Right cardiac atrium (tissue), 5 donors: ENCODE measurements at regions of chr12 and their contacts with region 1.

Region 1: DNA sequence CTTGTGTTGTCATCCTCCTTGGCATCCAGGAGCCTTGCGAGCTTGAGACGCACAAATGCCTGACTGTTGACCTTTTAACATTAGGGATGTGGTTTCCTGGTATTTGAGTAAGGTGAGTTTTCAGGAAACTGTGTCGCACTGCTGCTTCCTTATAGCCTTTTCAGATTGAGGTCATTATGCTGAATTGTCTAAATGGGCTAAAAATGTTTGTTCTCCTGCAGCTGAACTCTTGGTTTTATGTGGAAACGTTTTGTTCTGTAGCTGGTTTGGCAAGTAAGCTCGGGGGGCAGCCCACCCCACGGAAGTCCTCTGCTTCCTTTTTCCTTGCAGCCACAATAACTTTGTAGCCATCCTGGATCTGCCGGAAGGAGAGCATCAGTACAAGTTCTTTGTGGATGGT is 5.7 kb downstream of the PRKAB1 start:
- DNase-seq: peak in 2 of 3 donors; percentile 36 to 60
- ATAC-seq: peak; percentile 56 to 83
- H3K4me3 ChIP-seq: no peak overlapping the region
- H3K27ac ChIP-seq: peak overlapping the region; percentile 68
- H3K4me1 ChIP-seq: peaks cover 7% of the 10 kb centered on the region
- H3K27me3 ChIP-seq: no peaks in the 10 kb centered on the region

Region 2: GRCh38 chr12:119266963-119267362 is 406.7 kb before region 1 on chr12:
- intact Hi-C with region 1: no loop called
- DNase-seq: no peak
- ATAC-seq: no peak
- H3K4me3 ChIP-seq: no peak overlapping the region
- H3K27ac ChIP-seq: no peak overlapping the region
- H3K4me1 ChIP-seq: no peaks in the 10 kb centered on the region
- H3K27me3 ChIP-seq: no peaks in the 10 kb centered on the region

Region 3: GRCh38 chr12:119601877-119602733 is 71.5 kb before region 1 on chr12:
- intact Hi-C with region 1: no loop called
- DNase-seq: no peak
- ATAC-seq: no peak
- H3K4me3 ChIP-seq: no peak overlapping the region
- H3K27ac ChIP-seq: no peak overlapping the region
- H3K4me1 ChIP-seq: no peaks in the 10 kb centered on the region
- H3K27me3 ChIP-seq: no peaks in the 10 kb centered on the region

Region 4: DNA sequence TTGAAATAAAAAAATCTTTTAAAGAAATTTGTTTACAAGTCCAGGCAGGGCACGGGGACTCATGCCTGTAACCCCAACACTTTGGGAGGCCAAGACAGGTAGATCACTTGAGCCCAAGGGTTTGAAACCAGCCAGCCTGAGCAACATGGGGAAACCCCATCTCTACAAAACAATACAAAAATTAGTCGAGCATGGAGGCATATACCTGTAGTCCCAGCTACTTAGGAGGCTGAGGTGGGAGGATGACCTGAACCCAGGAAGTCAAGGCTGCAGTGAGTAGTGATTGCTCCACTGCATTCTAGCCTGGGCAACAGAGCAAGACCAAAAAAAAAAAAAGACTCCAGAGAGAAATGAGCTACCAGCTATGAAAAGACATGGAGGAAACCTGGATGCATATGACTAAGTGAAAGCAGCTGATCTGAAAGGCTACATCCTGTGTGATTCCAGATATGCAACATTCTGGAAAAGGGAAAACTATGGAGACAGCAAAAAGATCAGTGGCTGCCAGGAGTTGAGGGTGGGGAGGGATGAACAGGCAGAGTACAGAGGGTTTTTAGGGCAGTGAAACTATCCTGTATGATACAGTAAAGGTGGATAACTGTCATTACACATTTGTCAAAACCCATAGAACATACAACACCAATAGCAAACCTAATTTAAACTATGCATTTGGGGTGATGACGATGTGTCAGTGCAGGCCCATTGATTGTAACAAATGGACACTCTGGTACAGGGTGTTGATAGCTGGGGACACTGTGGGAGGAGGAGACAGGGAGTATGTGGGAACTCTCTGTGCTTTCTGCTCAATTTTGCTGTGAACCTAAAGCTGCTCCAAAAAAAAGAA is 54.2 kb after region 1 on chr12:
- intact Hi-C with region 1: loop called in 1 of 4 experiments (anchors 2 kb)
- DNase-seq: no peak
- ATAC-seq: no peak
- H3K4me3 ChIP-seq: no peak overlapping the region
- H3K27ac ChIP-seq: no peak overlapping the region
- H3K4me1 ChIP-seq: no peaks in the 10 kb centered on the region
- H3K27me3 ChIP-seq: no peaks in the 10 kb centered on the region

Region 5: DNA sequence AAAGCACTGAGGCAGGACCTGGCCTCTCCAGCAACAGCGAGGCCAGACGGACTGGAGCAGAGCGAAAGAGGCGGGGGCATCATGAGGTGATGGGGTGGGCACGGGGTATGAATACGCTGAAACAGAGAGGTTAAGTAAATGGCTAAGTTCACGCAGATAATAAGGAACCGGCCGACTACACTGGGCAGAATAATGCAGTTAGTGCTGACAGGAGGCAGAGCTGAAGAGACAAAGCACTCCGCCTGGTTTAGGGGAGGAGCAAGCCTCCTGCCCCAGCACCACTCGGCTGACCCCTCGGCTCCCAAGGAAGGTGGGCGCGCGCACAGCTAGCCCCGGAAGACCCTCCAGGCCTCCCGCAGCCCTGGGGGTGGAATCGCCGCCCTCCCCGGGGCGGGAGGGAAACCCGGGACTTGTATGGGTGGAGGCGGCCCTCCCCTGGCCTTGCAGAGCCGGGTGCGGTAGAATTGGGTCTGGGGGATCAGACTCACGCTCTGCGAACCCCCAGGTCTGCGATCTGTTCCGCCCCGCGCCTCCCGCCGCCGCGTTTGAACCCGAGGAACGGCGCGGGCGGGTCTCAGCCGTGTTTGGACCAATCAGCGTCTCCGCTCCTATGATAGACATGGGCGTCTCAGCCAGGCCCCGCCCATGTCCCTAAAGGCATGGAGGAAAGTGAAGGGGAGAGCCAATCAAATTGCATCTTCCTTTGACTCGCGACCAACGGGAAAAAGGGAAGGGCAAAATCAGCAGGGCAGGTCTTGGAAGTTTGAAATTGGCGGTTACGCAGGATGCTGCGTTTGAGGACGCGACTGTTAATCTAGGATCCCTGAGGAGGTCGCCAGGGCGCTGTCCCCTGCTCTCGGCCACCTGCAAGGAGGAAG is 203.4 kb after region 1 on chr12 and contains the start of gene CIT:
- intact Hi-C with region 1: no loop called
- DNase-seq: peak; percentile 88 to 94 (median 94)
- ATAC-seq: peak; percentile 100
- H3K4me3 ChIP-seq: peak within 1 kb of the TSS; percentile 53
- H3K27ac ChIP-seq: no peak within 1 kb of the TSS
- H3K4me1 ChIP-seq: peaks cover 2% of the 10 kb centered on the region
- H3K27me3 ChIP-seq: no peaks in the 10 kb centered on the region
- total RNA-seq, gene CIT: 2.0 to 3.0 (median 2.5) TPM